ENCODE measurements at regions of chr12 and their contacts with region 1.

Region 1: DNA sequence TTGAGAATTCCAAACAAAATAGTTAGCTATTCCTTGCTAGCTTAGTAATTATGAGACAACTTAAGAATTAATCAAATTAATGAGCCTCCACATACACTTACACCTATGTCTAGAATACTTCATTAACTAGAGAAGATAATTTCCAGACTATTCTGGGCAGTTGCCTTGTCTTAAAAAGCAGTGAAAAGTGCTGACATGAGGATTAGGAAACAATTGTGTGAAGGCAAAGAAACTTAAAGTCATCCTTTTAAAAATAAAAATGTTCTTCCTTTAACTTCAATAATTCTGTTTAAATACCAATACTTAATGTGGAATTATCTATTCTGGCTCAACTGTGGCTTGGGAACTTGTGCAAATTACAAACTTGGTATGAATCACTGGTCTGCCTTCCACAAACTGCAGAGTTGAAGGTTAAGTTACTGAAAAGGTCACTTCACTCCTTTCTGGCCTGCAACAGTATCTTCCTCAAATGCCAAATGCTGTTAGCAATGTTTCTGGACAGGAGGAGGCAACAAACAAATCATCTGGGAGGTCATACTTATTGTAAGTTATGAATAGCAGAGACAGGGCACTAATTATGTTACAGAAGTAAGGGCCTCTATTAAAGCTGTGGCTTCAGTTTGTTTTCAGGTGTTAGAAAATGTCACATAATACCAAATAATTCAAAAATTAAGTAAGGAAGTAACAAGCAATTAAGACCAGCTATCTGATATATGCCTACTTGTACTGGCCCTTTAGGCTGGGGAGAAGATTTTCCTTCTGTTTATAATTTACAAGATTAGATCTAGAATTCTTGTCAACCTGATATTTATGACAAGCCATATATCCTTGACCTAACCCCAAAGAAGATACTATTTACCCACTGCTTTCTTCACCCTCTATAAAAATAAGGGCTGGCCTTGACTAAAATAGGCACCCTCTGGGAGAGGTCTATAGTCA is 19.1 kb downstream of the PPTC7 start:
- DNase-seq: no peak
- ATAC-seq: no peak
- H3K4me3 Mint-ChIP-seq: peak overlapping the region; percentile 55
- H3K27ac Mint-ChIP-seq: peak overlapping the region; percentile 92
- H3K4me1 Mint-ChIP-seq: peaks cover 87% of the 10 kb centered on the region
- H3K27me3 Mint-ChIP-seq: no peaks in the 10 kb centered on the region
- CTCF ChIP-seq: no peak

Region 2: DNA sequence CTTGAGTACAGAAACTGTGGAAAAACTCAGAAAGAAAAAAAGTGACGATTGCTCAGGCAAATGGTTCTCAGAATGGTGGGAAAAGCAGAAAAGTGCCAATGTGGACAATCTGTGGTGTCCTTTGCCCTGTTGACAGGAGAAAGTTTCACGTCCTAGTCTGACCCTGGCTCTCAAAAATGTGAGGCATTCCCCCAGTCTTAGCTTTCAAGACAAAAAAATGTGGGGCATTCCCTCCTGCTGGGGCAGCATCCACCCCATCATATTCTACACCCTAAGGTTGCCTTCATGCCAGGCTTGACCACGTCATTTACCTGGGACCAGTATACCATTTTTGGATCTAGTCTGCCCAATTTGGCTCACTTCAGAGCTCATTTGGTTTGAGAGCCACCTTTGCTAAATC is 139.7 kb before region 1 on chr12:
- CTCF ChIA-PET with region 1: no interaction called
- POLR2A ChIA-PET with region 1: no interaction called
- intact Hi-C with region 1: no loop called
- DNase-seq: no peak
- ATAC-seq: no peak
- H3K4me3 Mint-ChIP-seq: no peak overlapping the region
- H3K27ac Mint-ChIP-seq: no peak overlapping the region
- H3K4me1 Mint-ChIP-seq: no peaks in the 10 kb centered on the region
- H3K27me3 Mint-ChIP-seq: no peaks in the 10 kb centered on the region
- CTCF ChIP-seq: no peak

Region 3: DNA sequence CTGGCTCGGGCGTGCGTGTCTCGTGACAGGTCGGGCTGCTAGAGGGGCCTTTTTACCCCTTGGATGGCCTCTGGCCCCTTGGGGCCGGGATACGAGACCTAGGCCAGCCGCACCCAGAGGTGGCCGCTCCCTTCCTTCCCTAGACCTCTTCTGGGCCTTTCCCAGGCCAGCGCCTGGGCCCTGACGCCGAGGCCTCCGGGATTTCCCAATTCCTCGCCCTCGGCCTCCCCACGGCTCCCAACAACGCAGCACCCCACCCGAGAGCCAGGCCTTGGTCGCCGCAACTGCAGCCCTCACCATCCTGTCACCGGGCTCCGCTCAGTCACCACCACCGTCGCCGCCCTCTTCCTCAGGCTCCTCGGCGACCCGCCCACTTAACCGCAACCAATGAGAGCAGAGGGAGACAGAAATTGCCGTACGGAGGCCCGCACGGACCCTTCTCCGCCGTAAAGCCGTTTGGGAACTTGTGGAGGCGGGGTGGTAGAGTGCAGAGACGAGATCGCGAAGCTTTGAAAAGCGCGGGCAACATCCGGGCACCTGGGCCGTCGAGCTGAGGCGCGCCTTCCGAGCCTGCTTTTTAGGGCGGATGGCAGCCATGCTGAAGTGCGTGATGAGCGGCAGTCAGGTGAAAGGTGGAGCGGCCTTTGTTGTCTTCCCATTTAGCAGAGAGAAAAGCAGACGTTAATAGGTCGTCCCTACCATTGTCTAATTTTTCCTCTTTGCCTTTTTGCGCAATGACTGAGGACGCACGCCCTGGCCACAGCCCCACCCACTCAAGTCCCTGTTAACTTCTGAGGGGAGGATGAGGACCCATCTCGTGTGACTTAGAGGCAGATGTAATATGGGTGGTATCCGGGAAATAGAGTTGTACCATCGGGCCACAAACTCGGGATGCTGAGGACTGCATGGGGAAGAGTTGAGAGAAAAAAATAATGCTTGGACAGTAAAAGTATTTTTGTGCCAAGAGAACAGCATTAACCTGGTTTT is 61.9 kb before region 1 on chr12 and contains the starts of genes RAD9B and VPS29:
- CTCF ChIA-PET with region 1: no interaction called
- POLR2A ChIA-PET with region 1: interaction called, 5 read pairs
- intact Hi-C with region 1: loop called (anchors 1 kb)
- DNase-seq: peak; percentile 95
- ATAC-seq: peak; percentile 95
- H3K4me3 Mint-ChIP-seq: peak within 1 kb of the TSS; percentile 99
- H3K27ac Mint-ChIP-seq: peak within 1 kb of the TSS; percentile 96
- H3K4me1 Mint-ChIP-seq: peaks cover 36% of the 10 kb centered on the region
- H3K27me3 Mint-ChIP-seq: no peaks in the 10 kb centered on the region
- CTCF ChIP-seq: no peak
- total RNA-seq, gene RAD9B: 1.2 and 1.3 TPM in 2 replicates
- total RNA-seq, gene VPS29: 99.6 and 117 TPM in 2 replicates

Region 4: GRCh38 chr12:110577717-110578521 is 13.9 kb after region 1 on chr12:
- CTCF ChIA-PET with region 1: interaction called, 3 read pairs
- POLR2A ChIA-PET with region 1: interaction called, 50 read pairs
- intact Hi-C with region 1: loop called (anchors 1 kb)
- DNase-seq: no peak
- ATAC-seq: peak; percentile 12
- H3K4me3 Mint-ChIP-seq: peak overlapping the region; percentile 47
- H3K27ac Mint-ChIP-seq: peak overlapping the region; percentile 84
- H3K4me1 Mint-ChIP-seq: peaks cover 70% of the 10 kb centered on the region
- H3K27me3 Mint-ChIP-seq: no peaks in the 10 kb centered on the region
- CTCF ChIP-seq: no peak

Region 5: DNA sequence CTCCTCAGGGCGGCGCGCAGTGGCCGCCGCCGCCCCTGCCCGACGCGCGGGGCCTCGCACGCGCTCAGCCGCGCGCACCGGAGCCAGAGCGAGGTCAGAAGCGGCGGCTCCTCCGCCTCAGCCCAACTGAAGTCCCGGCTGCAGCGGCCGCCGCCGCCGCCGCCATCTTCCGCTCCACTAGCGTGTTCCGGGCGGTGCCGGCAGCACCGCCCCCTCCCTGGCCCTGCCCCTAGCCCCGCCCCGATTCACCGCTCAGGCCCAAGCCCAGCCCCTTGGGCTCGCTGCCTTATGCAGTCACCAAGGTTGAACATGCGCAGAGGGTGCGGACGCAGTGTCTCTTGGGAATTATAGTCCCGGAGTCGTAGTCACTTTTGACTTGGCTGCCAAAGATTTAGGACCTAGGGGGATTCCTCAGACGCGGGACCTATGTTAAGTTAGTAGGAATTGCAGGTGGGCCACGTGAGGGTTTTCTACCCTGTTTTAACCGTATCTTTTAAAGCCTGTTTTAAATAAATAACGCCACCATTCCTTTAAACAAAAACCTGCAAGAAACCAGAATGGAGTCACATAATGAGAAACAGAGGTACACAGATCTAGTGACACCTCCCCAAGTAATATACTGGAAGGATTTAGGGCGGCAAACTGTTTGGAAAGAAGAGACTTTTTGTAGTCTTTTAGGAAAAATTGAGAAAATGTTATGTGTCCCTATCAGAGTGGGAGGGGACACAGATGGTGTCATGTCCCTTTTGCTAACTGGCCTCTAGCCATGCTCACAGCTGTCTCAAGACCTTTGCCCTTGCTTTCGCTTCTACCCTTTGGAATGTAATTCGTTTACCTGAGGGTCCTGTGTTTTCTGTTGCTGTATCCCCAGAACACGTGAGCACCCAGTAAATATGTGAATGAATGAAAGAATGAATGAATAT is 19.4 kb after region 1 on chr12 and contains the start of gene PPTC7:
- CTCF ChIA-PET with region 1: interaction called, 3 read pairs
- POLR2A ChIA-PET with region 1: interaction called, 50 read pairs
- intact Hi-C with region 1: loop called (anchors 1 kb)
- DNase-seq: peak; percentile 85
- ATAC-seq: peak; percentile 93
- H3K4me3 Mint-ChIP-seq: peak within 1 kb of the TSS; percentile 90
- H3K27ac Mint-ChIP-seq: peak within 1 kb of the TSS; percentile 87
- H3K4me1 Mint-ChIP-seq: peaks cover 70% of the 10 kb centered on the region
- H3K27me3 Mint-ChIP-seq: no peaks in the 10 kb centered on the region
- CTCF ChIP-seq: no peak
- total RNA-seq, gene PPTC7: 34.5 and 40.8 TPM in 2 replicates

Region 6: GRCh38 chr12:110613771-110614684 is 50.1 kb after region 1 on chr12 and contains the start of gene TCTN1:
- CTCF ChIA-PET with region 1: no interaction called
- POLR2A ChIA-PET with region 1: interaction called, 10 read pairs
- intact Hi-C with region 1: no loop called
- DNase-seq: peak; percentile 95
- ATAC-seq: peak; percentile 98
- H3K4me3 Mint-ChIP-seq: peak within 1 kb of the TSS; percentile 89
- H3K27ac Mint-ChIP-seq: peak within 1 kb of the TSS; percentile 94
- H3K4me1 Mint-ChIP-seq: peaks cover 57% of the 10 kb centered on the region
- H3K27me3 Mint-ChIP-seq: no peaks in the 10 kb centered on the region
- CTCF ChIP-seq: no peak
- total RNA-seq, gene TCTN1: 22.4 and 29.5 TPM in 2 replicates

Region 7: DNA sequence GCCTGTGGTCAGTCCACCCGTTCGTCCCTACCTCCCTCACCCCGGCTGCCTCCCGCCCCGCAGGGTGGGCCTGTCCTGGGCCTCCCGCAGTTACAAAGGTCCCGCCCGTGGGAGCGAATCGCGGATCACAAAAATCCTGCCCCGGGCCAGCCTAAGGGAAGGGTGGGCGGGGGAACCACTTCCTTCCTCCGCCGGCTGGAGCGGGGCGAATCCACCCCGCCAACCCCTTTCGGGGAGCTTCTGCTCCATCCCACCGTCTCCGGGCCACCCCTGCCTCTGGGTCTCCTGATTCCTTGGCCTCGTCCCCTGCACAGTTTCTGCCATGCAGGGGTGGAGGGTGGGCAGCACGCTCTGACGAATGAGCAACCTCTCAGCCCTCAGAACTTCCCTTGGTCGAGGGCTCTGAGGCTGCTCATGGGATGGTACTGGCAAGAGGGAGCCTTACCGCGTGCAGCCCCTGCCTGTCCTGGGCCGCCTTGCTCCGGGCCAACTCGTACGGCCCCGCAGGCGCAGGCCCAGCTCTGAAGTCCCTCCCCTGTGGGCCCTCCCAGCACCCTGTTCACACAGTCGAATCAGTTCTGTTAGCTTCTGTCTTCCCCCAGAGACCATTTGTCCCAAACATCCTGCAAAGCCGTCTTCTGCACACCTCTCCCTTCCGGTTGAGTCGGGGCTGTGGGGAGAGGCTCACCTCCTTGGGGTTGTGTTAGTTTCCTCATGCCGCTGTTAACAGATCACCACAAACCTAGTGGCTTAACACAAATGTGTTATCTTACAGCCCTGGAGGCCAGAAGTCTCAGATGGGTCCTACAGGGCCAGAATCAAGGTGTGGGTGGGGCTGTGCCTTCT is 125.5 kb after region 1 on chr12:
- CTCF ChIA-PET with region 1: no interaction called
- POLR2A ChIA-PET with region 1: interaction called, 4 read pairs
- intact Hi-C with region 1: loop called (anchors 5 kb)
- DNase-seq: peak; percentile 61
- ATAC-seq: peak; percentile 63
- H3K4me3 Mint-ChIP-seq: peak overlapping the region; percentile 92
- H3K27ac Mint-ChIP-seq: peak overlapping the region; percentile 89
- H3K4me1 Mint-ChIP-seq: peaks cover 82% of the 10 kb centered on the region
- H3K27me3 Mint-ChIP-seq: no peaks in the 10 kb centered on the region
- CTCF ChIP-seq: no peak

Region 8: GRCh38 chr12:110699591-110700445 is 135.8 kb after region 1 on chr12:
- CTCF ChIA-PET with region 1: no interaction called
- POLR2A ChIA-PET with region 1: no interaction called
- intact Hi-C with region 1: no loop called
- DNase-seq: no peak
- ATAC-seq: no peak
- H3K4me3 Mint-ChIP-seq: no peak overlapping the region
- H3K27ac Mint-ChIP-seq: no peak overlapping the region
- H3K4me1 Mint-ChIP-seq: peaks cover 23% of the 10 kb centered on the region
- H3K27me3 Mint-ChIP-seq: no peaks in the 10 kb centered on the region
- CTCF ChIP-seq: no peak

Measured in activated B cell treated with CpG ODN at 0.5 μM for 24 hours (primary cell).